A673 (cell line): ENCODE measurements at regions of chr4 and their contacts with region 1.

Region 1: DNA sequence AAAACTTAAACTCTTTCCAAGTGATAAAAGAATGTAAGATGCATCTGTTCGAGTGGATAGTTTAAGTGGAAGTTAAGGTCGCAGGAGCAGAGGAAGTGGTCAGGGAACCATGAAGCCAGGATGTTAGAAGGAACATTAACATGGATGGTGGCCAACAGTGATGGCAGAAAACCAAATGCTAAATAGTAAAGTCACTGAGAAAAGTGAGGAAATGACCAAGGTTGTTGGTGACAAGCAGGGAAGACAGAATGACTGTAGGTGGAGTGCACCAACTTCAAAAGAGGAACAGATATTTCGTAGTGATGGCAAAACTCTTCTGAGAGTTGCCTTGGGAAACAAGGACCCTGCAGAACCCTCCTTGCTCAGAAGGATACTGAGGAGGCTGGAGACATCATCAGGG is 226.2 kb downstream of the PALLD start:
- DNase-seq: no peak
- H3K4me3 ChIP-seq: no peak overlapping the region
- H3K27ac ChIP-seq: no peak overlapping the region
- H3K4me1 ChIP-seq: peaks cover 22% of the 10 kb centered on the region
- H3K27me3 ChIP-seq: no peaks in the 10 kb centered on the region
- CTCF ChIP-seq: no peak

Region 2: DNA sequence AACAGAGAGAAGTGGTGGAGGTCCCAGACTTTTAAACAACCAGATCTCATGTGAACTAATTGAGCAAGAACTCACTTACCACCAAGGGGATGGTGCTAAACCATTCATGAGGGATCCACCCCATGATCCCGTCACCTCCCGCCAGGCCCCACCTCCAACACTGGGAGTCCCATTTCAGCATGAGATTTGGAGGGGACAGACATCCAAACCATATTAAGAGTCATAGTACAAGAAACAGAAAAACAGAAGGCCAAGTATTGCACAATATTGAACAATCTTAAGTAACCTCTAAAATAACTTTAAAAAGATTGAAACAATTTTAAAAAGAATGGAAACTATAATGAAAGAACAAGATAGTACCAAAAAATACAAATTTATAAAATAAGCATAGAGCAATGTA is 177.1 kb after region 1 on chr4:
- CTCF ChIA-PET with region 1: no interaction called
- POLR2A ChIA-PET with region 1: no interaction called
- intact Hi-C with region 1: loop called (anchors 5 kb)
- DNase-seq: no peak
- H3K4me3 ChIP-seq: no peak overlapping the region
- H3K27ac ChIP-seq: no peak overlapping the region
- H3K4me1 ChIP-seq: no peaks in the 10 kb centered on the region
- H3K27me3 ChIP-seq: no peaks in the 10 kb centered on the region
- CTCF ChIP-seq: no peak

Region 3: DNA sequence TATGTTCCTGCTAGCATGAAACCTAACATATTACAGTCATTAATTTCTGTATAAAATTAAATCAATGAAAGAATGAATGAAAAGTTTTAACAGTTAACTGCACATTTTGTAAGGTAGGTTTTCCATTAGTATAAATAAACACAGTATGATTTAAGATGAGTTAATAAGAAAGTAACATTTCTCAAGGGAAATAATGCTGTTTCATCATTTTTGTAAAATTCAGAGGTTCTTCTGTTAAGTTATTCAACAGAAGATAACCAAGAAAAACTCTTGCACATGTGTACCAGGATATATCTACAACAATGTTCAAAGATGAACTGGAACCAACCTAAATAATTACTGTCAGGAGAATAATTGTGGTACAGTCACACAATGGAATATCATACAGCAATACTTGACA is 800.8 kb after region 1 on chr4:
- CTCF ChIA-PET with region 1: no interaction called
- POLR2A ChIA-PET with region 1: no interaction called
- intact Hi-C with region 1: no loop called
- DNase-seq: no peak
- H3K4me3 ChIP-seq: no peak overlapping the region
- H3K27ac ChIP-seq: no peak overlapping the region
- H3K4me1 ChIP-seq: no peaks in the 10 kb centered on the region
- H3K27me3 ChIP-seq: no peaks in the 10 kb centered on the region
- CTCF ChIP-seq: no peak